HCT116 (cell line): ENCODE measurements at regions of chr10 and their contacts with region 1.

Region 1: DNA sequence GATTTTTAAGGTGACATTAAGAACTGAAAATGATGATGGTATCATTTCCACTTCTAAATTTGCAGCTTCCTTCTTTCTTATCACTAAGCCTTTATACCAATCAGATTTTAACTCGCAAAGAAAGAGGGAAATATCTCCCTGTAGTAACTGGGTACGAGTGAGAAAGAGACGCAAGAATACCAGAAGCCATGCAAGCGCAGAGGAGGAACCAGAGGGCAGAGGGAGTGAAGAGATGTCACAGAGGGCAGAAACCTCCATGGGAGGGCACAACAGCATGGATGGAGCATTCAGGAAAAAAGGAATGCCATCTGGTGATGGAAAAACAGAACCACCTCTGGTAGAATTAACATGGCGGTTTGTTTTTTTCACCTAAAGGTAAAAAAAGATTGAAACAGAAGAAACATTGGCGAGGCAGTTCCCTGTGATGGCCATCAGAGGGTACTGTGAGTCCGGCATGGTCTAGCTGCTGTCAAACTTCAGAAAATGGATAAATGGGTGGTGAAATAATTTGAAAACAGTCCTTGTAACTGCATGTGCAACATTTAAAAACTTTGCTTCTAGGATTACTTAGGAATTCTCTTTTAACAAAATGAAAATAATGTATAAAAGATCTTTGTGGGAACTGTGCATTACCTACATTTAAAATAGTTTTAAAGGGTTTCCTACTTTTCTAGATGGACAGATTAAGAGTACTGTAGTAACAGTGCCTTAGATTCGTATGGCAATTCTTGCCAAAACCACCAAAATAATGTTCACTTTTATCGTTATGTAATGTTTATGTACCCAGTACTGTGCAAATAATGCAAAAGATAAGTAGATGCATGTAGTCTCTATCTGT is 91.8 kb downstream of the ARHGAP12 start:
- DNase-seq: peak; percentile 22
- ATAC-seq: peak; percentile 79
- H3K4me3 ChIP-seq: no peak overlapping the region
- H3K27ac ChIP-seq: no peak overlapping the region
- H3K4me1 ChIP-seq: no peaks in the 10 kb centered on the region; a peak in 1 of 4 replicates
- H3K27me3 ChIP-seq: no peaks in the 10 kb centered on the region
- CTCF ChIP-seq: peak; percentile 31 to 80 (median 79); a peak in 5 of 6 replicates
- POLR2A ChIP-seq: no peak
- RAD21 ChIP-seq: peak; percentile 73

Region 2: DNA sequence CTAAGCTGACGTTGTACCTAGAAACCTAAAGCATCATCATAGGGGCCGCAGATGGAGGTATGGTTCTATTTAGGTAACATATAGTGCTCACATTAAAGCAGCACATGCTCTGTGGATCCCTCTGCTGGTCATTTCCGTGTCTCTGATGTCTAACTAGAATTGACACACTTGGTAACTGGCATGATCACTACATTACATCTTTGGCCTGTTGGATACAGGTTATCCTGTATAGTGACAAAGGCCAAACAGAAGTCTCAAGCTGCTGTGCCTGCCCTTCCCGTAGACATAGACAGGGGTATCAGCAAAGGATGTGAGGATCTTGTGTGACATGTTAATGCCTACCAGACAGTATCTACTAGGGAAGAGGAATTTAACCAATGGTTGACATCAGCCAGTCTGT is 168.3 kb after region 1 on chr10:
- CTCF ChIA-PET with region 1: interaction called, 5 read pairs
- POLR2A ChIA-PET with region 1: no interaction called
- RAD21 ChIA-PET with region 1: no interaction called
- intact Hi-C with region 1: loop called (anchors 2 kb)
- DNase-seq: peak; percentile 43
- ATAC-seq: peak; percentile 84
- H3K4me3 ChIP-seq: no peak overlapping the region
- H3K27ac ChIP-seq: no peak overlapping the region
- H3K4me1 ChIP-seq: peaks cover 0 to 6% of the 10 kb centered on the region in 2 experiments; a peak in 1 of 4 replicates
- H3K27me3 ChIP-seq: no peaks in the 10 kb centered on the region
- CTCF ChIP-seq: peak; percentile 39 to 78 (median 69); a peak in 5 of 6 replicates
- POLR2A ChIP-seq: no peak
- RAD21 ChIP-seq: peak; percentile 66

Region 3: DNA sequence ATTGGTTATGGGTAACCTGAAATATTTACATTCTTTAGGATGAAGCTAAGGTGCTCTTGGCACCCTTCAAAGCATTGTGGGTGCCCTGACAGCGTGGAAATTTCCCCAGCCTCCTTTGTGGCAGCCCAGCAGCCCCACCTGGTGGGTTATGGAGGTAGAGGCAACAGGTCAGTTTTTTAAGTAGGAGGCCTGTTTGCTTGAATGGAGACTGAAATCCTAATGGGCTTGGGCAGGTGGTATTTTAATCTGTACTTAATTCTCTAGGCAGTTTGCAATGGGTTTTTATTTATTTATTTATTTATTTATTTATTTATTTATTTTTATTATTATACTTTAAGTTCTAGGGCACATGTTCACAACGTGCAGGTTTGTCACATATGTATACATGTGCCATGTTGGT is 370.8 kb after region 1 on chr10:
- CTCF ChIA-PET with region 1: interaction called, 3 read pairs
- POLR2A ChIA-PET with region 1: no interaction called
- RAD21 ChIA-PET with region 1: no interaction called
- intact Hi-C with region 1: loop called (anchors 10 kb)
- DNase-seq: peak; percentile 35
- ATAC-seq: peak; percentile 71
- H3K4me3 ChIP-seq: no peak overlapping the region
- H3K27ac ChIP-seq: no peak overlapping the region
- H3K4me1 ChIP-seq: peaks cover 3 to 13% of the 10 kb centered on the region in 2 experiments; a peak in 1 of 4 replicates
- H3K27me3 ChIP-seq: no peaks in the 10 kb centered on the region
- CTCF ChIP-seq: peak; percentile 61 to 83 (median 70); a peak in 5 of 6 replicates
- POLR2A ChIP-seq: no peak
- RAD21 ChIP-seq: peak; percentile 85